CD8-positive, alpha-beta T cell (primary cell): ENCODE measurements at regions of chr7 and their contacts with region 1.

Region 1: DNA sequence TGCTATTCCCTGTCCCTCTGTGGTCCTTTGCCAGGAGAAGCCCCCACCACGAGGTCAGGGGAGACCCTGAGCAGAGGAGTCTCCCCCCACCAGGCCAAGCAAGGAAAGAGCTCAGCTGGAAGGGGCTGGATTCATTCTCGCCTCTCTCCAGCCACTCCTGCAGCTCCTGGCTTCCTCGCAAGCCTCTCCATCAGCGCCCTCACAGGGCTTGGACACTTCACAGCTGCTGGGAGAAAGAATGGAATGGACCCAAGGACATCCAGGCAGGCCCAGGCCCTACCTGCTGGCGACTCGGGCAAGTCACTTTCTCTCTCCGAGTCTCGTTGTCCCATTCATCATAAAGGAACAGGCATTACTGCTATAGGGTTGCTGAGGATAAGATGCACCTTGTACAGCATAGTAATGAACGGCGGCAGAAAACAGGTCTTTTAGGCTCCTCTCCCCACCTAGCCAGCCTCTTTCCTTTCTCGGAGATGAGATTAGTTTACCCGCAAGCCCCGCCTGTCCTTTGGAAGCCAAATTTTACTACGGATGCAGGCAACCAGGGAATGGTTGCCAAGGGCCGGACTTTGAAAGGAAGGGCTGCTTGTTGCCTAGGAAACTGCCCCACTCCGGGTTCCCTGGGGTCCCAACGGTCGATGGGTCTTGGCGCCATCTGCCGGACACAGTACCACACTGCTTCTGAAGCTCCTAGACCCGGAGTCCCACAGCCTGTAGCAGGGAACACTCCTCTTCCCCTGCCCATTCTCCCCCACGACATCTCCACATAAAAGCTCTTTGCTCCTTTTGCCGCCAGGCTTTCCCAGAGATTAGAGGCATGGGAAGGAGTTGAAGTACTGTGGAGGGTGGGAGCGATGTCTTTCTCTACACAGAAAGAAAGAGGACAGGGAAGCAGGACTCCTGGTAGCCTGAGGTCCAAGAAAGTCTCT is 22.3 kb downstream of the IMPDH1 start:
- DNase-seq: peak; percentile 49 to 77 (median 71)
- ATAC-seq: peak; percentile 98
- H3K4me3 ChIP-seq: no peak overlapping the region
- H3K4me3 Mint-ChIP-seq: no peak overlapping the region
- H3K27ac ChIP-seq: no peak overlapping the region
- H3K27ac Mint-ChIP-seq: no peak overlapping the region
- H3K4me1 ChIP-seq: no peaks in the 10 kb centered on the region
- H3K4me1 Mint-ChIP-seq: no peaks in the 10 kb centered on the region
- H3K27me3 ChIP-seq: no peaks in the 10 kb centered on the region
- H3K27me3 Mint-ChIP-seq: no peaks in the 10 kb centered on the region
- CTCF ChIP-seq: peak; percentile 73

Region 2: GRCh38 chr7:128373606-128374005 is 13.9 kb before region 1 on chr7:
- CTCF ChIA-PET with region 1: interaction called, 17 read pairs
- POLR2A ChIA-PET with region 1: no interaction called
- intact Hi-C with region 1: no loop called
- DNase-seq: no peak
- ATAC-seq: no peak
- H3K4me3 ChIP-seq: no peak overlapping the region
- H3K4me3 Mint-ChIP-seq: no peak overlapping the region
- H3K27ac ChIP-seq: no peak overlapping the region
- H3K27ac Mint-ChIP-seq: no peak overlapping the region
- H3K4me1 ChIP-seq: no peaks in the 10 kb centered on the region
- H3K4me1 Mint-ChIP-seq: no peaks in the 10 kb centered on the region
- H3K27me3 ChIP-seq: no peaks in the 10 kb centered on the region
- H3K27me3 Mint-ChIP-seq: peaks cover 2% of the 10 kb centered on the region
- CTCF ChIP-seq: no peak

Region 3: GRCh38 chr7:129906700-129907099 is 1519.2 kb after region 1 on chr7:
- CTCF ChIA-PET with region 1: no interaction called
- POLR2A ChIA-PET with region 1: no interaction called
- intact Hi-C with region 1: no loop called
- DNase-seq: peak in 2 of 9 experiments; percentile 11 to 52
- ATAC-seq: peak; percentile 84
- H3K4me3 ChIP-seq: peak overlapping the region in 1 of 2 experiments; percentile 9
- H3K4me3 Mint-ChIP-seq: peak overlapping the region; percentile 42
- H3K27ac ChIP-seq: peak overlapping the region; percentile 41 to 66
- H3K27ac Mint-ChIP-seq: peak overlapping the region; percentile 82
- H3K4me1 ChIP-seq: peaks cover 69% of the 10 kb centered on the region
- H3K4me1 Mint-ChIP-seq: peaks cover 85% of the 10 kb centered on the region
- H3K27me3 ChIP-seq: no peaks in the 10 kb centered on the region
- H3K27me3 Mint-ChIP-seq: no peaks in the 10 kb centered on the region
- CTCF ChIP-seq: no peak